ENCODE measurements at regions of chr2 and their contacts with region 1.

Region 1: DNA sequence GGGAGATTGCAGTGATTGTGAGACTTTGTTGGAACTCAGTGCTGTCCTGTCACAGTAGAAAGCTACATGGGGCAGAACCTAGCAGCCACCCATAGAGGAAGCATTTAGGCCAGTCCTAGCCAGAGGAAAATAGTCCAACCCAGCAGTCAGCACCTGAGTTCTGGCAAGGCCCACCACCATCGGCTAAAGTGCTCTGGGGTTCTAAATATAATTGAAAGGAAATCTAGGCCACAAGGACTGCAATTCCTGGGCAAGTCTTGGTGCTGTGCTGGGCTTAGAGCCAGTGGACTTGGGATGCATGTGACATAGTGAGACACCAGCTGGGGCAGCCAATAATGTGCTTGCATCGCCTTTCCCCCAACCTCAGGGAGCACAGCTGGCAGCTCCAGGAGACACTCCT is 28.9 kb upstream of the ACTR2 start:
- DNase-seq: no peak
- H3K4me3 ChIP-seq: no peak overlapping the region
- H3K27ac ChIP-seq: no peak overlapping the region
- H3K4me1 ChIP-seq: peaks cover 0 to 3% of the 10 kb centered on the region in 2 experiments; a peak in 2 of 4 replicates
- H3K27me3 ChIP-seq: no peaks in the 10 kb centered on the region
- CTCF ChIP-seq: no peak
- EP300 ChIP-seq: no peak
- RAD21 ChIP-seq: no peak

Region 2: DNA sequence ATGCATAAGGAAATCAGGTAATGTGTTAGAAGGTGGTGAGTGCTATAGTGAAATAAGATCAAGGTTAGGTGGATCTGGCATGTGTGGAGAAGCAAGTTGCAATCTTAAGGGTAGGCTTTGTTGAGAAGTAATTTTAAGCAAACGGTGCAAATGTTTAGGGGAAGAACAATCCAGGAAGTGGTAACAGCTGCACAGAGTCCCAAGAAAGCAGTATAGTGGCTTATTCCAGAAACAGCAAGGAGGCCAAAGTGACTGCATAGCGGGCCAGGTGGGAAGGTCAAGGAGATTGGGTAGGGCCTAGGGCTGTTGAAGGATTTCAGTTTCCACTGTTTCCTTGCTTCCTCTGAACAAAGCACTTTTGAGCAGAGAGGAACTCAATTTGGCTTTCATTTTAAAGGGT is 38.8 kb before region 1 on chr2:
- CTCF ChIA-PET with region 1: no interaction called
- POLR2A ChIA-PET with region 1: no interaction called
- DNase-seq: no peak
- H3K4me3 ChIP-seq: no peak overlapping the region
- H3K27ac ChIP-seq: no peak overlapping the region
- H3K4me1 ChIP-seq: no peaks in the 10 kb centered on the region
- H3K27me3 ChIP-seq: no peaks in the 10 kb centered on the region
- CTCF ChIP-seq: no peak
- EP300 ChIP-seq: no peak
- RAD21 ChIP-seq: no peak

Region 3: DNA sequence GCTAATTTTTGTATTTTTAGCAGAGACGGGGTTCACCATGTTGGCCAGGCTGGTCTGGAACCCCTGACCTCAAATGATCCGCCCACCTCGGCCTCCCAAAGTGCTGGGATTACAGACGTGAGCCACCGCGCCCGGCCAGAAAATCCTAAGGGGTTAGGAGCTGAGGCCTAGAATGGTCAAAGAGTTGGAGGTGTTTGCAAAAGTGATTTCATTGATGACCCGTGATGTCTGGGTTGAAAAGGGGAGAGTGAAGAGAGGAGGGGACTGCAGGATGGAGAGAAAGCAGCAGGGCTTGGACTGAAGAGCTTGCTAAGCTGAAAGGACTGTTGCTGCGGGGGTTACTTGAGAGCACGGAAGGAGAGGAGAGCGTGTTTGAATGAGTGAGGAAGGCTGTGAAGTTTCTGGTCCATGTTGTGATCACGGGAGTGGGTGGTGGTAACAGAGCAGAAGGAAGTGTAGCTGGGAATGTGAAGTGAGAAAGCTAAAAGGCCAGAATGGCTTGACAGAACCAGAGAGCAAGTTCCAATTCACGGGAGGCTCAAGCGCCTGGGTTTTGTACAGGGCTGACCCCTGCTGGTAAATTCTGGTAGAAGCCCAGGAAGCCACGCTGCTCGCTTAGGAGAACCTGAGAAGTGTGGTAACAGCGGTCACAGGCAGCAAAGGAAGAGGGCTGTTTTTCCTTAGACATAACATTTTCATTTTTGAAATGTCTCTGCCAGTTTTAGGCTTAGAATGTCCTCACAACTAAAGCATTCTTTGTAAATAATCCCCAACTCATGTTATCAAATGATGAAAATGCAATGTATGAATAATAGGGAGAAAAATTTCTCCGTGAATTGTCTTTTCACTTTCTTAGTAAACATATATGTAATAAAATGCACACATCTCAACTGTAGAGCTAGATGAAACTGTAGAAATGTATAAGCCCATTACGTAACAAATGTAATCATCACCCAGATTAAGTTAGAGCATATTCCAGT is 11.6 kb before region 1 on chr2:
- CTCF ChIA-PET with region 1: interaction called, 10 read pairs
- POLR2A ChIA-PET with region 1: no interaction called
- DNase-seq: peak; percentile 84
- H3K4me3 ChIP-seq: no peak overlapping the region; a peak in 1 of 4 replicates
- H3K27ac ChIP-seq: no peak overlapping the region
- H3K4me1 ChIP-seq: no peaks in the 10 kb centered on the region; a peak in 1 of 4 replicates
- H3K27me3 ChIP-seq: no peaks in the 10 kb centered on the region
- CTCF ChIP-seq: peak; percentile 82
- EP300 ChIP-seq: no peak
- RAD21 ChIP-seq: peak; percentile 78

Region 4: DNA sequence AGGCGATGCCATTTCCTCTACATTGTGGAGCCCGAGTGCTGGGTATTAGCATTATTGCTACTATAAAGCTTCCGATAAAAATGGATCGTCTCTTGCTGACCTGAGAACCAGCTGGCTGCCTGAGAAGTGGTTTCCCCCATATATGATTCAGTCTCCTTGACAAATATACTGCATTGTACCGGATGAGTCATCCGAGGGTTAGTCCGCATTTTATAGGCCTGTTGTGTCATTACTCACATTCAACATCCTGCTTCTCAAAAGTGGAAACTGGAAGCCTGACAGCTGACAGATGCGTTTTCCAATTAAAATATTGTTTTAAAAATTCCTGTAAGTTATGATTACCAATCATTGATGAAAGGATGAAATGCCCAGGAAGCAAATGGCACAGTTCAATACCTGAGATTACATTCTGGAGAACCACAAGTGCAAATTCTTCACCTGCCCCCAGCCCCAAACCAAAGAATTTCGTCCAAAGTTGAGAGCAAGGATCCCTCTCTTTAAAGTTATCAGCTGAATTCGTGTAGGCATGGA is 167.9 kb after region 1 on chr2:
- CTCF ChIA-PET with region 1: no interaction called
- POLR2A ChIA-PET with region 1: no interaction called
- DNase-seq: no peak
- H3K4me3 ChIP-seq: peak overlapping the region; percentile 10 to 51; a peak in 3 of 4 replicates
- H3K27ac ChIP-seq: peak overlapping the region; percentile 74 to 95
- H3K4me1 ChIP-seq: peaks cover 51 to 54% of the 10 kb centered on the region in 2 experiments
- H3K27me3 ChIP-seq: no peaks in the 10 kb centered on the region
- CTCF ChIP-seq: no peak
- EP300 ChIP-seq: peak in 1 of 2 experiments; percentile 81; a peak in 1 of 4 replicates
- RAD21 ChIP-seq: no peak

Region 5: DNA sequence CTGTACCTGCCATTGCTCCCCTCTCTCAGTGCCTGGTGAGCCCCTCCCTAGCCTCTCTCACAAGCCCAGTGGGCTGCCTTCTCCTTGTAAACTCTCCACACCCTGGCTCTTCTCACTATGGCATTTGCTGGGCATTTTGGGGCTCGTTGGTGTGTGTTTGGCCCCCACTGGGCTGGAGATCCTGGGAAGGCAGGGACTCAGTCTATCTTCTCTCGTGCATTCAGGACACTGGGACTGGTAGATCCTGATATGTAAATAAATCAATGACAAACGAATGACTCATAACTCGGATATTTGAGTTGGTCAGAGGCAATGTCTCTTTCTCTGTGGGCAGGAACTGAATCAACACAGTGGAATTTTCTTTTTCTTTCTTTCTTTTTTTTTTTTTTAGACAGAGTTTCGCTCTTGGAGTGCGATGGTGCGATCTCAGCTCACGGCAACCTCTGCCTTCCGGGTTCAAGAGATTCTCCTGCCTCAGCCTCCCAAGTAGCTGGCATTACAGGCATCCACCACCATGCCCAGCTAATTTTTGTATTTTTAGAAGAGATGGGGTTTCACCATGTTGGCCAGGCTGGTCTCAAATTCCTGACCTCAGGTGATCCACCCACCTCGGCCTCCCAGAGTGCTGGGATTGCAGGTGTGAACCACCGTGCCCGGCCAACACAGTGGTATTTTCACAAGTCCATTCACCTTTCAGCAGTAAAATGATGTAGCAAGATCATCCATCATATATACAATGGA is 378.3 kb after region 1 on chr2:
- CTCF ChIA-PET with region 1: no interaction called
- POLR2A ChIA-PET with region 1: no interaction called
- DNase-seq: no peak
- H3K4me3 ChIP-seq: peak overlapping the region in 1 of 2 experiments; percentile 42; a peak in 1 of 4 replicates
- H3K27ac ChIP-seq: peak overlapping the region; percentile 59 to 97; a peak in 3 of 4 replicates
- H3K4me1 ChIP-seq: peaks cover 0 to 16% of the 10 kb centered on the region in 2 experiments; a peak in 2 of 4 replicates
- H3K27me3 ChIP-seq: no peaks in the 10 kb centered on the region
- CTCF ChIP-seq: no peak
- EP300 ChIP-seq: peak in 1 of 2 experiments; percentile 67; a peak in 1 of 4 replicates
- RAD21 ChIP-seq: no peak